ENCODE measurements at regions of chr2 and their contacts with region 1.

Region 1: GRCh38 chr2:27071277-27071989 is at the start of gene OST4:
- DNase-seq: peak; percentile 84
- H3K4me3 ChIP-seq: peak within 1 kb of the TSS; percentile 96
- H3K27ac ChIP-seq: peak within 1 kb of the TSS; percentile 99
- H3K27me3 ChIP-seq: no peaks in the 10 kb centered on the region
- CTCF ChIP-seq: no peak; the same call in 1 of the 2 replicates
- polyA plus RNA-seq, gene OST4: 679 and 783 TPM in 2 replicates

Region 2: DNA sequence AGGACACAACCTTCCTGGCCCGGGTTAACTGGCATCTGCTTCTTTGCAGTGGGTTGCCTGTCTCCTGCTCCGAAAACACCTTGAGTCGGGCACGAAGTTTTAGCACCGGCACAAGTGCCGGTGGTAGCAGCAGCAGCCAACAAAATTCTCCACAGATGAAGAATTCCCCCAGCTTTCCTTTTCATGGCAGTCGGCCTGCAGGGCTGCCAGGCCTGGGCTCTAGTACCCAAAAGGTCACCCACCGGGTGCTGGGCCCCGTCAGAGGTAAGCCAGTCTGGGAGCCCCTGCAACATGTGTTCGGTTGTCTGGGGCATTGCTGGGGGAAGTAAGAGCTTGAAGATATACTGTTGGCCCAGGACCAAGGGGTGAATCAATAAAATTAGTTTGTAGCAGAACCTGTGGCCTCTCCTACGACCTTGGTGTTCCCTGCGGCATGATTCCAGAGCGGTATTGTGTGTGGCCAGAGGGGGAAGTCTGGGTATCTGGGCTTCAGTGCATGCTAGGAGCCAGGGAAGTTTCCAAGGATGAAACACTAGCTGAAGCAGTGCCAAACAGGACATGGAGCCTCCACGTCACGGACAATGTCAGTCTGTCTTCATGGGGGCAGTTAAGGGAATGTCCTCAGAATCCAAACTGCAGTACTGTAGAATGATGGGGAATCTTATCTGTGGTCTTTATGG is 12.2 kb before region 1 on chr2:
- CTCF ChIA-PET with region 1: interaction called, 3 read pairs
- POLR2A ChIA-PET with region 1: interaction called, 15 read pairs
- DNase-seq: no peak
- H3K4me3 ChIP-seq: no peak overlapping the region
- H3K27ac ChIP-seq: no peak overlapping the region
- H3K27me3 ChIP-seq: no peaks in the 10 kb centered on the region
- CTCF ChIP-seq: no peak